ENCODE measurements at regions of chr11 and their contacts with region 1.

Region 1: DNA sequence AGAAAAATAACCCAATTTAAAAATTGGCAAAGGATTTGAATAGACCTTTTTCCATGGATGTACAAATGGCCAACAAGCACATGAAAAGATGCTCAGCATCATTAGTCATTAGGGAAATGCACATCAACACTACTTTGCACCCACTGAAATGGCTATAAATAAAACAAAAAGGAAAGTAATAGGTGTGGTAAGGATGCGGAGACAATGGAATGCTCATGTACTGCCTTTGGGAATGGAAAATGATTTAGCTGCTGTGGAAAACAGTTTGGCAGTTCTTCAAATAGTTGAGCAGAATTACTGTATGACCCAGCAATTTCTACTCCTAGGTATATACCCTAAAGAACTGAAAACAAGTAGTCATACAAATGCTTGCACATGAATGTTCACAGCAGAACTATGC is 37.4 kb downstream of the LARGE2 start:
- DNase-seq: no peak
- H3K4me3 ChIP-seq: no peak overlapping the region
- H3K27ac ChIP-seq: no peak overlapping the region
- H3K4me1 ChIP-seq: no peaks in the 10 kb centered on the region
- H3K27me3 ChIP-seq: no peaks in the 10 kb centered on the region
- CTCF ChIP-seq: no peak
- EP300 ChIP-seq: no peak
- POLR2A ChIP-seq: no peak

Region 2: GRCh38 chr11:46216019-46216764 is 256.3 kb after region 1 on chr11:
- in situ Hi-C with region 1: no loop called
- intact Hi-C with region 1: loop called (anchors 5 kb)
- DNase-seq: no peak
- H3K4me3 ChIP-seq: peak overlapping the region in 3 of 4 donors; percentile 5 to 31 (median 22)
- H3K27ac ChIP-seq: peak overlapping the region in 3 of 4 donors; percentile 22 to 58 (median 44)
- H3K4me1 ChIP-seq: peaks cover 0 to 9% (median 4%) of the 10 kb centered on the region in 4 donors
- H3K27me3 ChIP-seq: no peaks in the 10 kb centered on the region
- CTCF ChIP-seq: no peak
- EP300 ChIP-seq: no peak
- POLR2A ChIP-seq: peak; percentile 32

Measured in transverse colon (tissue), 4 donors.